ENCODE measurements at regions of chr1 and their contacts with region 1.

Region 1: GRCh38 chr1:12596007-12596821 is 21.8 kb downstream of the DHRS3 start:
- DNase-seq: peak; percentile 83 to 89
- ATAC-seq: peak; percentile 61 to 82 (median 72)
- H3K4me3 ChIP-seq: peak overlapping the region in 9 of 10 donors; percentile 14 to 46 (median 39)
- H3K27ac ChIP-seq: peak overlapping the region; percentile 72 to 95 (median 91)
- H3K4me1 ChIP-seq: peaks cover 70 to 100% (median 94%) of the 10 kb centered on the region in 9 donors
- H3K27me3 ChIP-seq: peaks cover 0 to 4% (median 0%) of the 10 kb centered on the region in 7 donors
- CTCF ChIP-seq: no peak

Region 2: GRCh38 chr1:12454406-12455391 is 141.5 kb before region 1 on chr1:
- intact Hi-C with region 1: loop called in 1 of 10 experiments (anchors 5 kb)
- DNase-seq: no peak
- ATAC-seq: peak; percentile 8 to 41 (median 28)
- H3K4me3 ChIP-seq: no peak overlapping the region
- H3K27ac ChIP-seq: peak overlapping the region; percentile 31 to 91 (median 74)
- H3K4me1 ChIP-seq: peaks cover 35 to 98% (median 90%) of the 10 kb centered on the region in 9 donors
- H3K27me3 ChIP-seq: no peaks in the 10 kb centered on the region
- CTCF ChIP-seq: no peak

Region 3: DNA sequence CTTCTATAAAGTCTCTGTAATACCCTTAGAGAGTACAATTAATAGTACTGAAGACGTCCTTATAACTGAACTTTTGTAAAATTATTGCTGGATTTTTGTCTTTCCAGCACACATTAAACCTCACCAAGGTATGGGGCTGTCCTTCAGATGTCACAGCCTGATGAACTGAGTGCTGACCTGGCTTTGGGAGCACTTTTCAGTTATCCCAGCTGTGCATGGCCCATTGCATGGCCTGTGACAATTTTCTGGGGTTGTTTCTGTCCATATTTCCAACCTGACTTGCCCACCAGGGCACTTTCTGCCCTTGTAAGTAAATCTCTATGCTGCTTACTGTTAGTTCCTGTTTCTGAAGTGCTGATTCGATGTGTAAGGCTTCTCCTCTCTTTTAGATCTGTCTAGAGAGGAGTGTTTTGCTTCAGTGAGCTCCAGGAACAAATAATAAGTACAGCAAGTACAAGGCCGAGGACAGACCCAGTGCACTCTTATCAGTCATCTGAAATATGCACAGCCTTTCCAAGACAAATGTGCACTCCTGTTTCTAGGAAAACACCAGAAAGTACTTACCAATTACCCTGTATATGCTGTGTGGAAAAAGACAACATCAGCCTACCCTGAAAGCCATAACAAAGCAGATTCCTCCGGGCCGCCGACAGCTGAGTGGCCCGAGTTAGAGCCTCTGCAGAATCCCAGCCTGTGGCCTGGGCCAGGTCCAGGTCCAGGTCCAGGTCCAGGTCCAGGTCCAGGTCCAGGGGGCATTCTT is 99.9 kb before region 1 on chr1:
- intact Hi-C with region 1: no loop called
- DNase-seq: no peak
- ATAC-seq: peak; percentile 44 to 88 (median 76)
- H3K4me3 ChIP-seq: no peak overlapping the region
- H3K27ac ChIP-seq: peak overlapping the region in 9 of 10 donors; percentile 46 to 83 (median 68)
- H3K4me1 ChIP-seq: peaks cover 8 to 31% (median 26%) of the 10 kb centered on the region in 9 donors
- H3K27me3 ChIP-seq: no peaks in the 10 kb centered on the region
- CTCF ChIP-seq: no peak

Region 4: DNA sequence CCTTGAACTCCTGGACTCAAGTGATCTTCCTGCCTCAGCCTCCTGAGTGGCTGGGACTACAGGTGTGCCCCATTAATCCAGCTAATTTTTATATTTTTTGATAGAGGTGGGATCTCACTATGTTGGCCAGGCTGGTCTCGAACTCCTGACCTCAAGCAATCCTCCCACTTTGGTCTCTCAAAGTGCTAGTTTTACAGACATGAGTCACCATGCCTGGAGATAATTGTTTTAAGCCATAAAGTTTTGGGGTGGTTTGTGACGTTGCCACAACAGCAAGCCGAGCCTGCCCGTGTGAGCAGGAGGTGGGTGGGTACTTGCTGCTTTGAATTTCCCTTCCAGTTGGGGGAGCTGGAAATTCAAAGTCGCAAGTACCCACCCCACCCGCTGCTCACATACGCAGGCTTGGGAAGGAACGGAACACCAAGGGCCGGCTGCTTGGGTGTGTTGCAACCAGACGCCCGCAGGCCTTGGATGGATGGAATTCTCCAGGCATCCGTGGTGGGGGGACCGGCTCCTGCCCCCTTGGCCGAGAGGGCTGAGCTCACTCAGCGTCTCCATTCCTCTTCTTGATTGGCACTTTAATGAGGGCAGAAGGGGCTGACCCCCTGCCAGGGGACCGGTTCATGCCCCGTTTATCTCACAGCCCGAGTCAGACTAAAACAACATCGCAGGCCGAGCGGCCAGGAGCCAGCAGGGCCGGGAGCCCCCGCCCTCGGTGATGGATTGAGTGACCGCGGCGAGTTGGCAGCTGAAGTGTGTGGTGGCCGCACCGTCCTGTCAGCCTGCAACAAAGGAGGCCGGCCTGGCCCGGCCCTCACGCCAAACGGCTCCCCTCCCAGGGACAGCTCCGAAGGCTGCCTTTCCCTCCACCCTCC is 56.3 kb before region 1 on chr1:
- intact Hi-C with region 1: loop called in 1 of 10 experiments (anchors 5 kb)
- DNase-seq: peak; percentile 58 to 82
- ATAC-seq: peak; percentile 68 to 87 (median 84)
- H3K4me3 ChIP-seq: peak overlapping the region in 5 of 10 donors; percentile 1 to 37 (median 21)
- H3K27ac ChIP-seq: peak overlapping the region; percentile 11 to 73 (median 48)
- H3K4me1 ChIP-seq: peaks cover 2 to 42% (median 26%) of the 10 kb centered on the region in 9 donors
- H3K27me3 ChIP-seq: no peaks in the 10 kb centered on the region
- CTCF ChIP-seq: peak in 1 of 9 donors; percentile 8

Region 5: DNA sequence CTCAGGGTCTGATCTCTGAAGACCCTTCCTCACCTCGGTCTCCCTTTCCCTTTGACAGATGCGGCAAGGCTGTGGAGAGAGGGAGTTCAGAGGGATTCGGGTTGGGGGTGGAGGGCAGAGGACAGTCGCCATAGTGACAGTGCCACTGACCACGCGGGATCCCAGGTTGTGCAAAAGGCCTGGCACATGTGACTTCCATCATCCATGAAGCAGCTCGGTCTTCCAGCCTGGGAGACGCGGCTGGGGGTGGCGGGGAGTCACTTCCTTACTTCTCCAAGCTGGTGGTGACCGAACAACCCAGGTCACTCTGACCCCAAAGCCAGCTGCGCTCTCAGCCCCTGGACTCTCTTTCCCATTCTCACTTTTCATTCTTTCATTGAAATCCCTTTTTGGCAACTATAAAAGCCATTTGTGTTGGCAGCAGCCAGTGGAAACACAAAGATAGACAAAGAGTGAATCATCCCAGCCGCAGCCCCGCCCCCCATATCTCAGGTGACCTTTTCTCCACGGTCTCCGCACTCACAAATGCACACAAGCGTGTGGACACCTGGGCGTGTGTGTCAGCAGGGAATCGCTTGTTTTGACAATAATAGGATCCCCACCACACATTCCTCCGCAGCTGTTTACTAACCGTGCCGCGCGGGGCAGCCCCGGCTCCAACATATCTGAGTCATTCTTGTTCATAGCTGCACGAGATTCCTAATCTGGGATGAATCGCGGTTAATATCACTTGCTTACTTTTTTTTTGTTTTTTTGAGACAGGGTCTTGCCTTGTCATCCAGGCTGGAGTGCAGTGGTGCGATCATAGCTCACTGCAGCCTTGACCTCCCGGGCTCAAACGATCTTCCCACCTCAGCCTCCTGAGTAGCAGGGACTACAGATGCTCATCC is 46.5 kb before region 1 on chr1:
- intact Hi-C with region 1: loop called in 2 of 10 experiments (anchors 5 kb)
- DNase-seq: peak; percentile 62
- ATAC-seq: peak in 7 of 8 donors; percentile 9 to 49 (median 30)
- H3K4me3 ChIP-seq: no peak overlapping the region
- H3K27ac ChIP-seq: peak overlapping the region in 9 of 10 donors; percentile 58 to 82 (median 69)
- H3K4me1 ChIP-seq: peaks cover 25 to 78% (median 58%) of the 10 kb centered on the region in 9 donors
- H3K27me3 ChIP-seq: no peaks in the 10 kb centered on the region
- CTCF ChIP-seq: no peak

Region 6: GRCh38 chr1:12556368-12556930 is 39.8 kb before region 1 on chr1:
- intact Hi-C with region 1: loop called in 4 of 10 experiments (anchors 5 kb)
- DNase-seq: peak in 1 of 2 donors; percentile 61
- ATAC-seq: peak; percentile 41 to 68 (median 60)
- H3K4me3 ChIP-seq: no peak overlapping the region
- H3K27ac ChIP-seq: peak overlapping the region; percentile 35 to 90 (median 66)
- H3K4me1 ChIP-seq: peaks cover 9 to 57% (median 28%) of the 10 kb centered on the region in 9 donors
- H3K27me3 ChIP-seq: no peaks in the 10 kb centered on the region
- CTCF ChIP-seq: no peak

Region 7: GRCh38 chr1:12697397-12697796 is 101.2 kb after region 1 on chr1:
- intact Hi-C with region 1: no loop called
- DNase-seq: no peak
- ATAC-seq: no peak
- H3K4me3 ChIP-seq: no peak overlapping the region
- H3K27ac ChIP-seq: no peak overlapping the region
- H3K4me1 ChIP-seq: no peaks in the 10 kb centered on the region
- H3K27me3 ChIP-seq: peaks cover 0 to 6% (median 0%) of the 10 kb centered on the region in 7 donors
- CTCF ChIP-seq: no peak

Measured in heart right ventricle (tissue), 16 donors.